Activated CD4-positive, alpha-beta memory T cell treated with anti-CD3 and anti-CD28 coated beads, Interleukin-2, amount 10 ng/mL, durations not matched to agents 7 days and 5 days (primary cell): ENCODE measurements at regions of chr16 and their contacts with region 1.

Region 1: GRCh38 chr16:8878521-8878911 is 3.6 kb upstream of the LITAFD start:
- DNase-seq: no peak
- H3K4me3 Mint-ChIP-seq: no peak overlapping the region
- H3K27ac Mint-ChIP-seq: no peak overlapping the region
- H3K4me1 Mint-ChIP-seq: peaks cover 30% of the 10 kb centered on the region
- H3K27me3 Mint-ChIP-seq: no peaks in the 10 kb centered on the region

Region 2: DNA sequence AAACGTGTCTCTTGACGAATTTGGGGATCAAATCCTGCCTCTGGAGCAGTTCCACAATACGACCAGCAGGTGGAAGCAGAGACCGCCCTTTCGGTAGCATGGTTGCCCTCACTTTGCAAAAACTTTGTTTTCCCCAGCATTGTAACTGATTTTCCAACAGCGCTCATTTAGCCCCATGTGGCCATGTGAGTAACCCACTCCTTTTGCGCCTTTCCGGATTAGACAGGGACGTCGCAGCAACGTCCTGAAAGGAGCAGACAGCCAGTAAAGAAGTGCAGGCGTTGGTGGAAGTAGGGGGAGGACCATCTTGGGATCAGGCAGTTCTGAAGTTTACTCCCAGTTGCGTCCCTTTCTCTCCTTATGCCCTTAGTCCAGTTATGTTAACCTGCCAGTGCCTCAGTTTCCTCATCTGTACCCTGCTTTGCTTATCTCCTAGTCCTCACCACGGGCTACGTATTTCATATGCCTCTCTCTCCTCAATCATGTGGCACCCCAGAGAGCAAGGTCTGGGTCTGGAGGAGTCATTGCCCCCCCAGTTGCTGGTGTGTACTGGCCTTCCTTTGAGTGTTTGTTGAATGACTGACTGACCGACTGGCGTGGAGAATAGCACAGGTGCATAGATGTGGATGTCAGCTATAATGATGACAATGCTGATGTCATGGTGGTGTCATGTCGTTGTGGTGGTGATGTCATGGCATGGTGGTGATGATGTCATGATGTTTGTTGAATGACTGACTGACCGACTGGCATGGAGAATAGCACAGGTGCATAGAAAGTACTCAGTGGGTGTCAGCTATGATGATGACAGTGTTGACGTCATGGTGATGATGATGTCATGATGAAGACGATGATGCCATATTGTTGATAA is 310.5 kb before region 1 on chr16:
- CTCF ChIA-PET with region 1: interaction called, 20 read pairs
- POLR2A ChIA-PET with region 1: no interaction called
- DNase-seq: peak; percentile 82
- H3K4me3 Mint-ChIP-seq: no peak overlapping the region
- H3K27ac Mint-ChIP-seq: no peak overlapping the region
- H3K4me1 Mint-ChIP-seq: peaks cover 7% of the 10 kb centered on the region
- H3K27me3 Mint-ChIP-seq: no peaks in the 10 kb centered on the region

Region 3: DNA sequence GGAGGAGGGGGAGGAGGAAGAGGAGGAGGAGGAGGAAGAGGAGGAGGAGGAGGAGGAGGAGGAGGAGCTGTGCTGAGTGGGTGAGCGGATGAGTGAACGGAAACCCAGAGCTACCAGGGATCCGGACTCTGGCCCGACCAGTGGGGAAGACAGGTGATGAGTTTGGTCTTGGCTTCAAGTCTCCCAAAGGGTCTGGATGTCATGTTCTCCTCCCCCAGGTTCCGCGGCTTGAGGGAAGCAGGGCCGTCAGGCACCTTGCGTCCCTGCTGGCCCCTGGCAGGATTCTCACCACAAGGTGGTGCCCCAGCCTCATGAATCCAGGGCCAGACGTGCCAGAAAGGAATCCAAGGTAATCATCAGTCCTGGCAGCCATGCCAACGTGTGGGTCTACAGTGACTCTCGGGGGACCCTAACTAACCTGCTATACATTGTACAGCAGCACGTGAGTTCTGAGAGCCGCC is 217.6 kb before region 1 on chr16:
- CTCF ChIA-PET with region 1: interaction called, 24 read pairs
- POLR2A ChIA-PET with region 1: no interaction called
- DNase-seq: peak; percentile 64
- H3K4me3 Mint-ChIP-seq: no peak overlapping the region
- H3K27ac Mint-ChIP-seq: no peak overlapping the region
- H3K4me1 Mint-ChIP-seq: no peaks in the 10 kb centered on the region
- H3K27me3 Mint-ChIP-seq: no peaks in the 10 kb centered on the region

Region 4: DNA sequence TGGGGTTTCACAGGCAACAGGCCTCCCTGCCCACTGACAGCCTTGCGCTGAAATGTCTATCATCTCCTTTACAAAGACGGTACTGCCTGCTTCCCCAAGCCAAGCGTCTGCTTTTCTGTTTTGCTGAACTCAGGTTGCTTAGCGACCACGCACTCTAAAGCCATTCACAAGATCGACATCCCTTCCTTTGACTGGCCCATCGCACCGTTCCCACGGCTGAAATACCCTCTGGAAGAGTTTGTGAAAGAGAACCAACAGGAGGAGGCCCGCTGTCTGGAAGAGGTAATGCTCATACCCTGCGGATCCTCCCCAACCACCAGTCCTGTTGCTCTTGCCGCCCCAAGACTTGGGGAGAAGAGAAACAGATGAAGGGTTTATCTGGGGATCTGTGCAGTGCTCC is 109.8 kb before region 1 on chr16:
- CTCF ChIA-PET with region 1: no interaction called
- POLR2A ChIA-PET with region 1: no interaction called
- DNase-seq: no peak
- H3K4me3 Mint-ChIP-seq: no peak overlapping the region
- H3K27ac Mint-ChIP-seq: no peak overlapping the region
- H3K4me1 Mint-ChIP-seq: no peaks in the 10 kb centered on the region
- H3K27me3 Mint-ChIP-seq: no peaks in the 10 kb centered on the region

Region 5: GRCh38 chr16:8797364-8798173 is 80.9 kb before region 1 on chr16 and contains the starts of genes PMM2 and TMEM186:
- CTCF ChIA-PET with region 1: interaction called, 16 read pairs
- POLR2A ChIA-PET with region 1: interaction called, 9 read pairs
- DNase-seq: peak; percentile 97
- H3K4me3 Mint-ChIP-seq: peak within 1 kb of the TSS; percentile 93
- H3K27ac Mint-ChIP-seq: peak within 1 kb of the TSS; percentile 71
- H3K4me1 Mint-ChIP-seq: peaks cover 38% of the 10 kb centered on the region
- H3K27me3 Mint-ChIP-seq: no peaks in the 10 kb centered on the region
- total RNA-seq, gene PMM2: 41.7 to 41.8 TPM
- total RNA-seq, gene TMEM186: 12.2 to 12.6 TPM

Region 6: DNA sequence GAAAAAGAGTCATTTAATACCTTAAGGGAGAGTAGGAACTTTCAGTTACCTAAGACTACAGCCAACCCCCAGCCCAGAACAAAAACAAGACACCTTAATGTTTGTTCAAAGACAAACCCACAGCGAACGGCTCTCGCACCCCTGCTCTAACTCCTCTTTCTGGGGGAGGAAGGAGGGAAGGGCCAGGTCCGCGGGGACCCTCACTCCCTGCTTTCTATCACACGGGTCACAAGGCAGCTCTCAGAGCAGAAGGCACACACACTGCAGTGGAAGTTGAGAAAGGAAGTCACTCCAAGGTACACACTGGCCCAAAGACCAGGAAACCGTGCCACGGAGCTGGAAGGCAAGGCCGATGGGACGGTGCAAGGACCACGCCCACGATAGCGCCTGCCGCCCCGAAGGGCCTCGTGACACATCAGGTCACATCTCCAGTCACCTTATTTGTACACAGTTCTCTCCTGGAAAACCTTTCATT is 13.6 kb after region 1 on chr16:
- CTCF ChIA-PET with region 1: interaction called, 11 read pairs
- POLR2A ChIA-PET with region 1: interaction called, 8 read pairs
- DNase-seq: no peak
- H3K4me3 Mint-ChIP-seq: peak overlapping the region; percentile 24
- H3K27ac Mint-ChIP-seq: peak overlapping the region; percentile 88
- H3K4me1 Mint-ChIP-seq: peaks cover 30% of the 10 kb centered on the region
- H3K27me3 Mint-ChIP-seq: no peaks in the 10 kb centered on the region